ENCODE measurements at regions of chr18 and their contacts with region 1.

Region 1: DNA sequence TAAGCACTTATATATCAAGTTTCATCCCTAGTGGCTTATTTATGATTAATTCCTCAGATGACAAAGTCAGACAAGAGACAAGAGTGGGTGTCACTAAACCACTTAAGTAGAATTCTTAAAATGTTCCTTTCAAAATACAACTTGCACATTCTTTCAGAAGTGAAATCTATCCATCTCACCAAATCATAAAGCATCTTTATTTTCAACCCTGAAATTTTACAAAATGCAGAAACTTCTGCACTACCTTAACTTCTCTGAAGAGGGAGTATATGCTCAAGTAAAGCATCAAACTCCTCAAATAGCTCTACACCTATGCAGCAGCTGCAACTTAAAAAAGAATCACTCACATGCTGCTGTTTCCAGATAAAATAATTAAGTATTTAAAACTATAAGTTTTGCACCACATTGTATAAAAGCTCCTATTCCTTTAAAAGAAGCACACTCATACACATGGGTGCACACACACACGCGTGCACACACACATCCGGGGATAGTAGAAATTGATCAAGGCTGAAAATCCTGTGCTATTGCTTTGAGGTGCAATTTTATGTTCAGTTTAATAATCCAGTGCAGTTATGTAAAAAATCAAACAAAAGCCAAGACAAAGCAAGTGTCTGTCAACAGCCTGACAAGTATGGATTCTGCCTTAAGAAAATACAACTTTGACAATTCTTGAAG is 244.5 kb downstream of the TCF4 start:
- H3K4me3 Mint-ChIP-seq: no peak overlapping the region
- H3K27ac Mint-ChIP-seq: no peak overlapping the region
- H3K4me1 Mint-ChIP-seq: peaks cover 7% of the 10 kb centered on the region
- H3K27me3 Mint-ChIP-seq: no peaks in the 10 kb centered on the region

Region 2: GRCh38 chr18:55265984-55266383 is 77.6 kb before region 1 on chr18:
- intact Hi-C with region 1: no loop called
- H3K4me3 Mint-ChIP-seq: no peak overlapping the region
- H3K27ac Mint-ChIP-seq: peak overlapping the region; percentile 95
- H3K4me1 Mint-ChIP-seq: peaks cover 52% of the 10 kb centered on the region
- H3K27me3 Mint-ChIP-seq: no peaks in the 10 kb centered on the region

Region 3: GRCh38 chr18:55390898-55391297 is 47.4 kb after region 1 on chr18:
- intact Hi-C with region 1: loop called (anchors 10 kb)
- H3K4me3 Mint-ChIP-seq: no peak overlapping the region
- H3K27ac Mint-ChIP-seq: no peak overlapping the region
- H3K4me1 Mint-ChIP-seq: peaks cover 10% of the 10 kb centered on the region
- H3K27me3 Mint-ChIP-seq: no peaks in the 10 kb centered on the region

Region 4: GRCh38 chr18:55781481-55781957 is 438.0 kb after region 1 on chr18:
- intact Hi-C with region 1: loop called (anchors 5 kb)
- H3K4me3 Mint-ChIP-seq: no peak overlapping the region
- H3K27ac Mint-ChIP-seq: no peak overlapping the region
- H3K4me1 Mint-ChIP-seq: peaks cover 19% of the 10 kb centered on the region
- H3K27me3 Mint-ChIP-seq: peaks cover 24% of the 10 kb centered on the region

Measured in dendritic cell treated with granulocyte-macrophage colony-stimulating factor and Interleukin-4, amounts not matched to agents 40 ng/mL and 50 ng/mL, for 4 days (primary cell).